Colonic mucosa (tissue), 4 donors: ENCODE measurements at regions of chr19 and their contacts with region 1.

Region 1: DNA sequence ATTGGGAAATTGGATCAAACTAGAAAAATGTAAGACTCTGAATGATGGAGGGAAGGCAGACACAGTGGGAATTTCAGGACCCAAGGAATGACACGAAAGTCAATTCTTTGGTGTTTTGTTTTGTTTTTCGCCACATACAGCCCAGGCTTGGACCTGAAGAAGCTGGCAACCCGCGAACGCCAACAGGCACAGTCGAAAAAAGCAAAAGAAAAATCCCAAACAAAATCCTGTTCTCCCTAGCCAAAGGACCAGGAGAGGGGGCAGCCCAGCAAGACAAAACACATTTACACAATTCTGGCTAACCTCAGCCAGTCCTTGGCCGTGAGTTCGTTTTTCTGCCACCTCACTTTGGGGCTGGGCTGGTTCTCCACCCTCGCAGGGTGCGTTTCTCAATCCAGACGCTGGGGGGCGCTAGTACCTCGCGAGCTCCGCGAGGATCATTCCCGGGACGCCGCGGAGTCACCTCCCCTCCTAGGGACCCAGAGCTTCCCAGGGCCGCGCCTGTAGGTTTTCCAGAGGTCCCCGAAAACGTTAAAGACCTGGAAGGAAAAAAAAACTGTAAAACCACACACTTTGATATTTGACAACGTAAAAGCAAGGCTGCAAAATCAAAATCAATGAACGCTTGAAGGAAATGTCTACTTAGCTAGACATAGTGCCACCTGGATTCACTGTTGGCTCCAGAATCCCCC is 34.9 kb upstream of the TPM4 start:
- DNase-seq: peak; percentile 90
- H3K4me3 ChIP-seq: peak overlapping the region; percentile 1
- H3K27ac ChIP-seq: no peak overlapping the region
- H3K4me1 ChIP-seq: peaks cover 5% of the 10 kb centered on the region
- H3K27me3 ChIP-seq: no peaks in the 10 kb centered on the region
- CTCF ChIP-seq: peak; percentile 96

Region 2: GRCh38 chr19:16185123-16185767 is 143.8 kb after region 1 on chr19 and contains the start of gene FAM32A:
- intact Hi-C with region 1: loop called (anchors 2 kb)
- DNase-seq: peak; percentile 99
- H3K4me3 ChIP-seq: peak within 1 kb of the TSS; percentile 94
- H3K27ac ChIP-seq: peak within 1 kb of the TSS; percentile 59
- H3K4me1 ChIP-seq: no peaks in the 10 kb centered on the region
- H3K27me3 ChIP-seq: no peaks in the 10 kb centered on the region
- CTCF ChIP-seq: peak; percentile 23
- total RNA-seq, gene FAM32A: 76.9 to 78.3 TPM